ENCODE measurements at regions of chr2 and their contacts with region 1.

Region 1: DNA sequence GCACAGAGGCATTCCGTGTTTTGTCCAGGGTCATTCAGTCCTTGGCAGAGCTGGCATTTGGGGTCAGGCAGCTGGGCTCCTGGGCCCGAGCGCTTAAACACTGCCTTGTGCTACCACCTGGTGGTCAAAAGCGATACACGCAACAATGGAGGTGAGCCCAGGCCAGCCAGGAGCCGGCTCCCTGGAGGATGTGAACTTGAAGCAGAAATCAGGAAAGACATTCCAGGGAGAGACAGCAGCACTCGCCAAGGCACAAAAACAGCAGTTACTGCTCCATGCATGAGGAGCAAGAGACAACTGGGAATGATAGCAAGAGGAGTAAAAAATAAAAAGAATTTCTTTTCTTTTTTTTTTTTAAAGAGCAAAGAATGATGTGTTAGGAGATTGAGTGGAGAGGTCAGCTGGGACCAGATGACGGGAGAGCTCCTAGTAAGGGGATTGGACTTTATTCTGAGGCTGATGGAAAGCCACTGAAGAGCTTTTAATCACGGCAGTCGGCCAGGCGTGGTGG is 20.7 kb downstream of the SCYGR8 start:
- DNase-seq: peak; percentile 57 to 83 (median 78)
- H3K4me3 ChIP-seq: no peak overlapping the region
- H3K27ac ChIP-seq: peak overlapping the region in 7 of 59 donors; percentile 18 to 61 (median 44)
- H3K27me3 ChIP-seq: no peaks in the 10 kb centered on the region
- CTCF ChIP-seq: peak; percentile 81 to 98 (median 91)

Region 2: GRCh38 chr2:227132986-227133385 is 633.4 kb before region 1 on chr2:
- intact Hi-C with region 1: loop called (anchors 5 kb)
- DNase-seq: no peak
- H3K4me3 ChIP-seq: no peak overlapping the region
- H3K27ac ChIP-seq: no peak overlapping the region
- H3K27me3 ChIP-seq: peaks cover 0 to 13% (median 0%) of the 10 kb centered on the region in 45 donors
- CTCF ChIP-seq: no peak

Region 3: DNA sequence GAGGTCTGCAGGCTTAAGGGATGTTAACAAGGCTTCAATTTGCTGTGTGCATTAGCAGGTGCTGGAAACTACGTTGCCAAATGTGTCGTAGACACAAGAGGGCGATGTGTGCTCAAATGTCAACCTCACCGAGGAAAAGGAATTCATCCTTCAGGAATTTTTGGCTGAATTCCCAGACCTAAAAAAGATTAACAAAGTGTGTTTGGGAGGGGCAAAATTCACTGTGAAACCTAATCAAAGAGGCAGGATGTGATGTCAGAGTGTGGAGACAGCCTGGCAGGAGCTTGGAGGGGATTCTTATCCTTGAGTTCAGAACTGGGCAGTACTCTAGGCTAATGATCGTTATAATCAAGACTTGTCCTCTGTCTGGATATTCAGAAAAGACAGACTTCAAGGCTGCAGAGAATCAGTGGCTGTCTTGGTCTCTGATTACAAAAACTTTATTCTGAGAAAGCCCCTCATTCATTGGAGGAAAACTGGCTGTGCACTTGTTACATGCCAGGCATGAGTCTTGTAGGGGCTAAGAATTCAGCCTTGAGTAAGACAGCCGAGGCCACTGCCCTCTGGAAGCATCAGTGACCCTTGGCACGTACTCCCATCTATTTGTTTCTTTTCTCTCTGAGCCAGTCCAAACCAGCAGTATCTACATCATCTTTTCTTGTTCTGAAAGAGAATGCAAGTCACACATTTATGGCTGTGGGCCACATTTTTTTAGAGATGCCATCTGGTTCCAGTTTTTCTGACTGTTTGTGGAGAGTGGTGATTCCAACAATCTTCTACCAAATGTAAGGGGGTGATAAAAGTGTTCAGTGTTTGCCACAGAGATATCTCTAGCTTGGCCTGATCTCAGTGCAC is 360.0 kb before region 1 on chr2:
- intact Hi-C with region 1: loop called (anchors 2 to 10 kb)
- DNase-seq: peak in 6 of 10 donors; percentile 26 to 67 (median 60)
- H3K4me3 ChIP-seq: peak overlapping the region in 19 of 59 donors; percentile 2 to 40 (median 16)
- H3K27ac ChIP-seq: peak overlapping the region in 58 of 59 donors; percentile 28 to 93 (median 81)
- H3K27me3 ChIP-seq: no peaks in the 10 kb centered on the region
- CTCF ChIP-seq: peak; percentile 30 to 80 (median 71)

Region 4: GRCh38 chr2:227479865-227480475 is 286.5 kb before region 1 on chr2:
- intact Hi-C with region 1: loop called (anchors 1 to 10 kb)
- DNase-seq: no peak
- H3K4me3 ChIP-seq: no peak overlapping the region
- H3K27ac ChIP-seq: peak overlapping the region in 4 of 59 donors; percentile 21 to 49 (median 34)
- H3K27me3 ChIP-seq: no peaks in the 10 kb centered on the region
- CTCF ChIP-seq: peak; percentile 23 to 74 (median 54)

Region 5: GRCh38 chr2:227534714-227535113 is 231.7 kb before region 1 on chr2:
- intact Hi-C with region 1: no loop called
- DNase-seq: no peak
- H3K4me3 ChIP-seq: no peak overlapping the region
- H3K27ac ChIP-seq: no peak overlapping the region
- H3K27me3 ChIP-seq: no peaks in the 10 kb centered on the region
- CTCF ChIP-seq: no peak

Region 6: DNA sequence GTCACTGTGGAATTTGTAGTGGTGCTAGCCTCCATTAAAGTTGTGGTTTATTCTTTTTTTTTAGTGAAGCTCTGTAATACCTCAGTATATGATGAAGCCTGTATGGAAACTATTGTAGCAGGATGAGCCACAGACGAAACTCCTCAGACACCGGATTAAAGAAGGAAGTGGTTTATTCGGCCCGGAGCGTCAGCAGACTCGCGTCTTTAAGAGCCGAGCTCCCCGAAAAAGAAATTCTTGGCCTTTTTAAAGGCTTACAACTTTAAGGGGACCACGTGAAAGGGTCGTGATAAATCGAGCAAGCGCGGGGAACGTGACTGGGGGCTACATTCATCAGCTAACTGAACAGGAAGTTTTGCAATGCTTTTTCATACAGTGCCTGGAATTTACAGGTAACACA is 39.1 kb after region 1 on chr2:
- intact Hi-C with region 1: no loop called
- DNase-seq: peak in 3 of 10 donors; percentile 38 to 49 (median 43)
- H3K4me3 ChIP-seq: no peak overlapping the region
- H3K27ac ChIP-seq: peak overlapping the region in 13 of 59 donors; percentile 2 to 61 (median 31)
- H3K27me3 ChIP-seq: no peaks in the 10 kb centered on the region
- CTCF ChIP-seq: no peak

Region 7: DNA sequence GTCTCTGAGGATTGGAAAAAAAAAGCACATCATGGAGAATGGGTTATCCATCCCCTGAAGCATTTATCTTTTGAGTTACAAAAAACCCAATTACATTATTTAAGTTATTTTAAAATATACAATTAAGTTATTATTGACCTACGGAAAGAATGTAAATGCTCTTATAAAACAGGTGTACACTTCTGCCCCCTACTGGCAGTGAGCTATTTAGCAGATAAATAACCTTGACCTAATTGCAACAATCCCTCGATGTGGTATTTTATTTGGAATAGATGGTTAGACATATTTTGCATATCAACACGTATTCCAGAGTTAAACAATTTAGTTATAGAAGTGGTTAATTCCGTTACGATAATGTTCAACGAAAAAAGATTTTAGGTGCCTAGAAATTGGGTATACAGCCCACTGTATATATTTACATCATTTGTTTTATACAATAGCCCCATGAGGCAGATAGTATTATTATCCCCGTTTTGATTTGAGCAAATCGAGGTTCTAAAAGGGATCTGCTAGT is 95.9 kb after region 1 on chr2:
- intact Hi-C with region 1: loop called in 1 of 2 experiments (anchors 5 kb)
- DNase-seq: no peak
- H3K4me3 ChIP-seq: no peak overlapping the region
- H3K27ac ChIP-seq: peak overlapping the region in 1 of 59 donors; percentile 67
- H3K27me3 ChIP-seq: no peaks in the 10 kb centered on the region
- CTCF ChIP-seq: peak; percentile 47 to 91 (median 74)